Endothelial cell of umbilical vein (primary cell): ENCODE measurements at regions of chr3 and their contacts with region 1.

Region 1: DNA sequence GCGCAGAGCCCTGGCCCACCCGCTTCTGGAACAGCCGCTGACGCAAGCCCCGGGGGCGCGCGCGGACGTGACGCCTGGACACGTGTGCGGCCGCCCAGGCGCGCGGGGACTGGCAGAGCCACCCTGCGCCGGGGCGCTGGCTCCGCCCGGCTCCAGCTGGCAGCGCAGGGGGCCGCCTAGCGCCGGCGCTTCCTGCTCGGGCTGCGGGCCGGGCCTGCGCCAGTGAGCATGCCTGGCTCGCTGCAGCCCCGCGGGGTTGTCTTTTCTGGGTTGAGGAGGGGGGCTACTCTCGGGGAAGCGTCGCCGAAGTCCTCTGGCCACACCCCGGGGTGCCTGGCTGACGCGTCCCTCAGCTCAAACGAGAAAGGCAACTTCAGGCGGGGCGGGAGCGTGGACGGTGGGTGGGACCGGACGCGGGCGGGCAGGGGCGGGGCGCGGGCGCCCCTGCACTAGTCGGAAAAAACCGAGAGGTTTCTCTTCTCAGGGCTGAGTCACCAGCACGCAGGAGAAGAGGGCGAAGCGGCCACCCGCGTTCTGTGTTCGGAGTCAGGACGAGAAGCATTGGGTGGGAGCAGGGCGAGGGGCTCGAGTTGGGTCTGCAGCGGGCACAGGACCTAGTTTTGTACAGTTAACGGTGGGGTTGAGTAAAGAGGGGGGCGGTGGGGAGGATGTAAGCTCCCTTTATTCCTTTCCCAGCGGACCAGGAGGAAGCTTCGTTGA is at the start of gene SIAH2:
- DNase-seq: peak; percentile 94
- H3K4me3 ChIP-seq: peak within 1 kb of the TSS; percentile 43 to 85 (median 64)
- H3K27ac ChIP-seq: peak within 1 kb of the TSS; percentile 86
- H3K4me1 ChIP-seq: peaks cover 19% of the 10 kb centered on the region
- H3K27me3 ChIP-seq: no peaks in the 10 kb centered on the region
- CTCF ChIP-seq: no peak
- POLR2A ChIP-seq: peak; percentile 92
- total RNA-seq, gene SIAH2: 16.0 and 16.7 TPM in 2 replicates

Region 2: GRCh38 chr3:150528354-150528797 is 234.9 kb before region 1 on chr3:
- CTCF ChIA-PET with region 1: interaction called, 4 read pairs
- POLR2A ChIA-PET with region 1: no interaction called
- dilution Hi-C with region 1: no loop called
- intact Hi-C with region 1: loop called (anchors 5 kb)
- DNase-seq: peak; percentile 49
- H3K4me3 ChIP-seq: no peak overlapping the region
- H3K27ac ChIP-seq: no peak overlapping the region
- H3K4me1 ChIP-seq: no peaks in the 10 kb centered on the region
- H3K27me3 ChIP-seq: peaks cover 0 to 2% of the 10 kb centered on the region in 2 experiments
- CTCF ChIP-seq: peak in 1 of 2 donors; percentile 8
- POLR2A ChIP-seq: no peak

Region 3: DNA sequence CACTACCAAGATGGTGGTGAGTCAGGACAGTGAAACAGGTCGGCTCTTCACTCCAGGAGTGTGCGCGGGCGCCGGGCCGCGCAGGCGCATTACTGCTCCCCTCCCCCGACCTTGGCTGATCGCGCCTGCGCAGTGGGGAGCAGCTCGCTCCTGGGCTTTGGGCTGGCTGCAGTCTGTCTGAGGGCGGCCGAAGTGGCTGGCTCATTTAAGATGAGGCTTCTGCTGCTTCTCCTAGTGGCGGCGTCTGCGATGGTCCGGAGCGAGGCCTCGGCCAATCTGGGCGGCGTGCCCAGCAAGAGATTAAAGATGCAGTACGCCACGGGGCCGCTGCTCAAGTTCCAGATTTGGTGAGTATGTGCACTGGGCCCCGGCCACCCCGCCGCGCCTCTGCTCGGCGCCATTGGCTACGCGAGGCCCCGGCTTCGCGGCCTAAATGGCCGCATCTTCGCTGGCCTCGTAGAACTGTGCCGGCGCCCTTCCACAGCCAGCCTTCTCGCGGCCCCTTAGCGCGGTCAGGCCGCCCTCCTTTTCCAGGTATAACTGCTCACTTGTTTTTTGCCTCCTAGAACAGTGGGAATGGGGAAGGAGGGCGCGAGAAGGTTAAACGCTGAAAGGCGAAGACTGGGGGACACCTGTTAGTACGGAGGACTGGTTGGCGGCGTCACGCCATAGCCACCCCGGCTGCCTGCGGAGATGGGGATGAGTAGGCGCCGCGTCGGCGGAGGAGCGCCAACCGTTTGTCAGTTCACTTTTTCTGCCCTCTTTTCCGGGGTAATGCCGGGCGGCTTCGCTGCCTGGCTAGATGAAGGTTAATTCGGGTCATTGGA is 159.9 kb before region 1 on chr3 and contains the start of gene SELENOT:
- CTCF ChIA-PET with region 1: interaction called, 3 read pairs
- POLR2A ChIA-PET with region 1: interaction called, 3 read pairs
- dilution Hi-C with region 1: no loop called
- intact Hi-C with region 1: loop called (anchors 1 kb)
- DNase-seq: peak; percentile 99
- H3K4me3 ChIP-seq: peak within 1 kb of the TSS; percentile 67 to 72 (median 72)
- H3K27ac ChIP-seq: peak within 1 kb of the TSS; percentile 81
- H3K4me1 ChIP-seq: peaks cover 31% of the 10 kb centered on the region
- H3K27me3 ChIP-seq: no peaks in the 10 kb centered on the region
- CTCF ChIP-seq: peak; percentile 14 to 30
- POLR2A ChIP-seq: peak; percentile 98
- total RNA-seq, gene SELENOT: 89.2 and 103 TPM in 2 replicates

Region 4: DNA sequence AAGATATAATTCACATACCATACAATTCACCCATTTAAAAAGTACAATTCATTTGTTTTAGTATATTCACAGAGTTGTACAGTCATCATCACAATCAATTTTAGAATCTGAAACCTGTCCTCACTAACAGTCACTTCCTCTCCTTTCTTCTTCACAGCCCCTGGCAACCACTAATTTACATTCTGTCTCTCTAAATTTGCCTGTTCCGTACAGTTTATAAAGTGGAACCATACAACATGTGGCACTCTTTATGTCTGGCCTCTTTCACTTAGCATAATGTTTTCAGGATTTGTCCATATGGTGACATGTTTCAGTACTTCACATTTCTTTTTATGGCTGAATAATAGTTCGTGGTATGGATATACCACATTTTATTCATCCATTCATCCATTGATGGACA is 82.2 kb before region 1 on chr3:
- CTCF ChIA-PET with region 1: no interaction called
- POLR2A ChIA-PET with region 1: no interaction called
- dilution Hi-C with region 1: no loop called
- intact Hi-C with region 1: no loop called
- DNase-seq: no peak
- H3K4me3 ChIP-seq: no peak overlapping the region
- H3K27ac ChIP-seq: no peak overlapping the region
- H3K4me1 ChIP-seq: no peaks in the 10 kb centered on the region
- H3K27me3 ChIP-seq: peaks cover 0 to 1% of the 10 kb centered on the region in 2 experiments
- CTCF ChIP-seq: no peak
- POLR2A ChIP-seq: no peak

Region 5: DNA sequence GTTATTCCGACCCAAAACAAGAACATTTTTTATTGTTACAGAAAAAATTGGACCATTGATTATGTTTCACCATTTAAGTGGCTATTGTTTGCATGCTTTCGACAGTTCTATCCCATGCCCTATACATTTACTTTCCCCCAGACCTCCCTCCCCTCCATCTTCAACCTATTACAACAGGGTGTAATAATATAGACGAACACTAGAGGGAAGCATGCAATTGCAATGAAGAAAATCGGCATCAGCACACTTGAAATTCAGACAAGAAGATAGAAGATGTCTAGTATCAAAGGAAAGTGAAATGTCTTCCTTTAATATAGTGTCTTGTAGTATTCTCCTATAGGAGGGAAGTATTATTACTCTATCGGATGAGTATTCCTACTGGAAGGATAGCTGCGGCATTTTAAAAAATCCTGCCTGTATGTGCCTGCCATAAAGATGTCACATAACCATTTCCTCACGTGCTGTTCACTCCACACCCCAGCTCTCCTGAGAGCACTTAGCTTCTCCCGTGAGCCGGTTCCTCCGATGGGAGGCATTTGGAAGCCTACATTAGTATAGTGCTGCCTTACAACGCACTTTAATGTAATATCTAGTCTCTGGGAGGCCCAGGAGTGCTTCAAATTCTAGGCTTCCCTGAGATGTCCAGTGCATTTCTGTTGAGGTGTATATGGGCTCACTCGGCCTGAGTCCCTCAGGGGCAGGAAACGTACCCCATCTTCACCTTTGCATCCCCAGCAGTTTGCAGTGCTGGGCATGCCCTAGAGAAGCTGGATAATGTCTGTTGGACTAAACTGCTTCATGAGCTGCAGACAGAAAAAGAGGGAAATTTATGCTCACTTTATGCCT is 41.8 kb before region 1 on chr3:
- CTCF ChIA-PET with region 1: interaction called, 5 read pairs
- POLR2A ChIA-PET with region 1: no interaction called
- dilution Hi-C with region 1: no loop called
- intact Hi-C with region 1: loop called (anchors 1 kb)
- DNase-seq: peak; percentile 69
- H3K4me3 ChIP-seq: no peak overlapping the region
- H3K27ac ChIP-seq: no peak overlapping the region
- H3K4me1 ChIP-seq: no peaks in the 10 kb centered on the region
- H3K27me3 ChIP-seq: peaks cover 0 to 2% of the 10 kb centered on the region in 2 experiments
- CTCF ChIP-seq: peak; percentile 51 to 61
- POLR2A ChIP-seq: no peak

Region 6: DNA sequence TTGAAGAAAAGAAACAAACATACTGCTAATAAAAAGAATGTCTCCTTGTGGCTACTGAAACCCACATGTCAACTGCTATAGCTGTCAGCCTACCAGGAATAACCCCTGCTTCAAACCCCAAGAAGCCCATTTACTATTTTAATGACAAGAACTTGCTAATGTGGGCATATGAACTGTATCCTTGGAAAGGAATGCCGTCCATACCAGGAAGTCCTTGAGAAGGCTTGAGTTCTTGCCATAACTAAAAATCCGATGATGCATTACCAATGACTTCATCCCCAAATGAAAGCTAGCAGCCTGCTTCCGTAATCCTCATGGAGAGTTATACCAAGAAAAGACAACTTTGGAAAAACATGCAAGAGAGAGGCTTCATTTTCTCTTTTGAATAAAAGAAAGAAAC is 107.1 kb after region 1 on chr3:
- CTCF ChIA-PET with region 1: interaction called, 16 read pairs
- POLR2A ChIA-PET with region 1: no interaction called
- dilution Hi-C with region 1: no loop called
- intact Hi-C with region 1: no loop called
- DNase-seq: no peak
- H3K4me3 ChIP-seq: no peak overlapping the region
- H3K27ac ChIP-seq: no peak overlapping the region
- H3K4me1 ChIP-seq: no peaks in the 10 kb centered on the region
- H3K27me3 ChIP-seq: peaks cover 2 to 6% of the 10 kb centered on the region in 2 experiments
- CTCF ChIP-seq: no peak
- POLR2A ChIP-seq: no peak

Region 7: GRCh38 chr3:151003029-151003763 is 239.9 kb after region 1 on chr3:
- CTCF ChIA-PET with region 1: no interaction called
- POLR2A ChIA-PET with region 1: no interaction called
- dilution Hi-C with region 1: no loop called
- intact Hi-C with region 1: no loop called
- DNase-seq: no peak
- H3K4me3 ChIP-seq: no peak overlapping the region
- H3K27ac ChIP-seq: no peak overlapping the region
- H3K4me1 ChIP-seq: no peaks in the 10 kb centered on the region
- H3K27me3 ChIP-seq: peaks cover 2 to 10% of the 10 kb centered on the region in 2 experiments
- CTCF ChIP-seq: no peak
- POLR2A ChIP-seq: no peak